CD8-positive, alpha-beta T cell (primary cell): ENCODE measurements at regions of chr7 and their contacts with region 1.

Region 1: GRCh38 chr7:136009488-136010079 is 32.4 kb upstream of the MTPN start:
- DNase-seq: peak in 3 of 9 experiments; percentile 6 to 66 (median 58)
- ATAC-seq: no peak
- H3K4me3 ChIP-seq: no peak overlapping the region
- H3K4me3 Mint-ChIP-seq: no peak overlapping the region
- H3K27ac ChIP-seq: no peak overlapping the region
- H3K27ac Mint-ChIP-seq: no peak overlapping the region
- H3K4me1 ChIP-seq: no peaks in the 10 kb centered on the region
- H3K4me1 Mint-ChIP-seq: peaks cover 4% of the 10 kb centered on the region
- H3K27me3 ChIP-seq: no peaks in the 10 kb centered on the region
- H3K27me3 Mint-ChIP-seq: peaks cover 2% of the 10 kb centered on the region
- CTCF ChIP-seq: peak; percentile 99

Region 2: DNA sequence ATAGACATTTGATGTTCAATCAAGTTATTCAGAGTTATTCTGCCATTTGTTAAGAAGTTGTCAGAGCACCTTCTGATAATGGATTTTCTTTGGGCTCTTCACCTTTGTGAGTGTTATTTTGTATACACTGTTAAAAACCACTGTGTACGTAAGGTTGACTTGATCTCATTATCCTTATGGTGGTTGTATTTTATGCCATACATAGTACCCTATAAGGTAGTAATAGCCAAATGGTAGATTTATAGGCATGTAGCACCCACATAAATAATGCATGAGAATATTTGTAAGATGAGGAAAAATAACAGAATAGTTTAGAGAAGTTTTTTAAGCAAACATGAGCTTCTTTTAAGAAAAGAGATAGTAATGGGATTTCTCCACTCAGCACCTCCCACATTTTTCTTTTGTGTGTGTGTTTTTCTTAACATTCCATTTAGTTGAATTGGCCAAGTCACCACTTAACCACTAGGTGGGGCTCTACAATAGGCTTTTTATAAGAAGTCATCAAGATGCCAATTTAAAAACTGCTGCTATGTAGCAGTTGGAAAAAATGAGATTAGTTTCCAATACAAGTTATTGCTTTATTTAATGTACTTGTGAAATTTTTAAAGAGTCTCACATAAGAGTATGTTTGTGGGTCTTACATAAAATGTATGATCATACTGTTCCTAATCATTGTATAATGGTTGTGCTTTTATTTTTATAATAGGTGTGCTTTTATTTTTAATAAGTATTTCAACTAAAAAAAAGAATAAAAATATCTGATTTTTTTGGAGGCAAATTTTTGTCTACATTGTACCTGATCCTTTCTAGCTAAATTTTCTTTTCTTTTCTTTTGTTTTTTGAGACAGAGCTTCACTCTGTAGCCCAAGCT is 388.4 kb before region 1 on chr7:
- CTCF ChIA-PET with region 1: no interaction called
- POLR2A ChIA-PET with region 1: no interaction called
- intact Hi-C with region 1: loop called (anchors 1 kb)
- DNase-seq: peak in 3 of 9 experiments; percentile 17 to 61 (median 52)
- ATAC-seq: peak; percentile 42
- H3K4me3 ChIP-seq: no peak overlapping the region
- H3K4me3 Mint-ChIP-seq: no peak overlapping the region
- H3K27ac ChIP-seq: no peak overlapping the region
- H3K27ac Mint-ChIP-seq: no peak overlapping the region
- H3K4me1 ChIP-seq: no peaks in the 10 kb centered on the region
- H3K4me1 Mint-ChIP-seq: no peaks in the 10 kb centered on the region
- H3K27me3 ChIP-seq: no peaks in the 10 kb centered on the region
- H3K27me3 Mint-ChIP-seq: no peaks in the 10 kb centered on the region
- CTCF ChIP-seq: peak; percentile 95

Region 3: DNA sequence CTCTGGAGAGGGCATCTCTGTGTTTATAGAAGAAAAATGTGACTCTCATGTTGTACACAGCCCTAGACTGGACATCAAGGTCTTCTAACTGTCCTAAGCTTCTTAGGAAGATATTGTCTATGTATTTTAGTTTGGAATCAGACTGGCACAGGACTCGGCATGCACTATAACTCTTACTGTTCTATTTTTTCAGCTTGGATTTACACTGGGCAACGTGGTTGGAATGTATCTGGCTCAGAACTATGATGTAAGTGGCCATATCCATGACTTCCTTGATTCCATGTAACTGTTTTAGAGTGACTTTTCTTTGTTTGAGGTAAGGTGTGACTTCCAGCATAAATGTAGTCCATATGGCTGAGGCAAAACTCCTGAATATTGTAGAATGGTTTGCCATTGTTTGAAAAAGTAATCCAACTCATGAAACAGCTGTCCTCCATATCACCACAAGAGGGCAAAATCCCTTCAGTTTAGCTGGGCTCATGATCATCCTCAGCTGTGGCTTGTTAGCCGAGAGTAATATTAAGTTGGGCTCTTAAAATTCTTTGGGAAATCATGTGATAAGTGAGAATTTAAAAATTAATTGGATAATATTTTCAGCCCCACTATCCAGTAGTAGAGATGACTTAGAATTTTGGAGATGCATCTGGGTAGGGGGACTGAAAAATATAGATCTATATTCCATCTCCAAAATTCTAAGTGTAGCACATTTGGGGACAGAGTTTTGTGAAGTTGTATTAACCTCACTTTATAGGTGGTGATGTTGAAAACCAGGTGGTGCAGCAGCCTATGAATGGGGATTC is 336.8 kb before region 1 on chr7:
- CTCF ChIA-PET with region 1: interaction called, 7 read pairs
- POLR2A ChIA-PET with region 1: no interaction called
- intact Hi-C with region 1: loop called (anchors 1 to 2 kb)
- DNase-seq: peak in 2 of 9 experiments; percentile 40 to 43
- ATAC-seq: peak; percentile 61
- H3K4me3 ChIP-seq: no peak overlapping the region
- H3K4me3 Mint-ChIP-seq: no peak overlapping the region
- H3K27ac ChIP-seq: no peak overlapping the region
- H3K27ac Mint-ChIP-seq: no peak overlapping the region
- H3K4me1 ChIP-seq: no peaks in the 10 kb centered on the region
- H3K4me1 Mint-ChIP-seq: peaks cover 28% of the 10 kb centered on the region
- H3K27me3 ChIP-seq: no peaks in the 10 kb centered on the region
- H3K27me3 Mint-ChIP-seq: no peaks in the 10 kb centered on the region
- CTCF ChIP-seq: peak; percentile 57

Region 4: DNA sequence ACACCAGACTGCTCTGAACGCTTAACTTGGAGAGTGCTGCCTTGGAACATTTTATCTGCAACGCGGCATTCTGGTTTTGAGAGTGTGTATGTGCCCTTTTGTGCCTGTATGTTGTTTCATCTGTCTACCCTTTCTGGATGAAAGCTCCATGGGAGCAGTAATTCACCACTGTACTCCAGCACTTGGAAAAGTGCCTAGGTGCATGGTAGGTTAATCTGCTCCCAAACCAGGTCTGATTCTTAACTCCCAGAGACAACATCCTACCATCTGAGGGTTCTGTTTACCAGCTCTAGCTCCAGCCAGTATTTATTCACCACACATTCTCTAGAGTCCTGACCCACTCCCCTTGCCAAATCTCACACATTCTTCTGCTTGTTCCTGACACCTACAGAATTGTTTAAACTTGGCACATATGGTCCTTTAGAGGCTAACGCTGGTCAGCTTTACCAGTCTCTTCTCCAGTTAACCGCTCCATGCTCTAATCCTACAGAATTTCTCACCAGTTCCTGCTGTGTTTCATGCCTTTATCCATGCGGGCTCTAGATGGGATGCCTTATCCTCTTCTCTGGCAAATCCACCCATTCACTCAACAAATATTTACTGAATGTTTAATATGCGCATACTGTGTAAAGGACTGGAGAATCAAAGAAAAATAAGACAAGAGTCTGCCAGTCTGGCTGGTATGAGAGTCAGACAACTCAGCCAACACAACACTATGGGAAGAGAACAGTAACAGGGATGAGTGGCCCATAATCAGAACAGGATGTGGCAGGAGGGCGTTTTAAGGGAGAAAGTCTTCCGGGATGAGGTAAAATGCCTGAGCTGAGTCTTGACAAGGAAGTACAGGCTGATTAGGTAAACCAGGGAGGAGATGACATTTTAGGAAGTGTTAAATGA is 78.8 kb before region 1 on chr7:
- CTCF ChIA-PET with region 1: no interaction called
- POLR2A ChIA-PET with region 1: no interaction called
- intact Hi-C with region 1: loop called in 1 of 2 experiments (anchors 5 kb)
- DNase-seq: no peak
- ATAC-seq: no peak
- H3K4me3 ChIP-seq: no peak overlapping the region
- H3K4me3 Mint-ChIP-seq: no peak overlapping the region
- H3K27ac ChIP-seq: no peak overlapping the region
- H3K27ac Mint-ChIP-seq: peak overlapping the region; percentile 43
- H3K4me1 ChIP-seq: peaks cover 4% of the 10 kb centered on the region
- H3K4me1 Mint-ChIP-seq: peaks cover 38% of the 10 kb centered on the region
- H3K27me3 ChIP-seq: no peaks in the 10 kb centered on the region
- H3K27me3 Mint-ChIP-seq: no peaks in the 10 kb centered on the region
- CTCF ChIP-seq: no peak

Region 5: GRCh38 chr7:136023134-136023875 is 13.7 kb after region 1 on chr7:
- CTCF ChIA-PET with region 1: interaction called, 15 read pairs
- POLR2A ChIA-PET with region 1: no interaction called
- intact Hi-C with region 1: no loop called
- DNase-seq: no peak
- ATAC-seq: no peak
- H3K4me3 ChIP-seq: no peak overlapping the region
- H3K4me3 Mint-ChIP-seq: no peak overlapping the region
- H3K27ac ChIP-seq: no peak overlapping the region
- H3K27ac Mint-ChIP-seq: no peak overlapping the region
- H3K4me1 ChIP-seq: no peaks in the 10 kb centered on the region
- H3K4me1 Mint-ChIP-seq: no peaks in the 10 kb centered on the region
- H3K27me3 ChIP-seq: no peaks in the 10 kb centered on the region
- H3K27me3 Mint-ChIP-seq: peaks cover 3% of the 10 kb centered on the region
- CTCF ChIP-seq: no peak

Region 6: GRCh38 chr7:137462074-137462715 is 1452.6 kb after region 1 on chr7:
- CTCF ChIA-PET with region 1: no interaction called
- POLR2A ChIA-PET with region 1: no interaction called
- intact Hi-C with region 1: no loop called
- DNase-seq: no peak
- ATAC-seq: no peak
- H3K4me3 ChIP-seq: no peak overlapping the region
- H3K4me3 Mint-ChIP-seq: no peak overlapping the region
- H3K27ac ChIP-seq: no peak overlapping the region
- H3K27ac Mint-ChIP-seq: no peak overlapping the region
- H3K4me1 ChIP-seq: no peaks in the 10 kb centered on the region
- H3K4me1 Mint-ChIP-seq: no peaks in the 10 kb centered on the region
- H3K27me3 ChIP-seq: peaks cover 0 to 3% of the 10 kb centered on the region in 2 experiments
- H3K27me3 Mint-ChIP-seq: no peaks in the 10 kb centered on the region
- CTCF ChIP-seq: no peak